ENCODE measurements at regions of chr6 and their contacts with region 1.

Region 1: DNA sequence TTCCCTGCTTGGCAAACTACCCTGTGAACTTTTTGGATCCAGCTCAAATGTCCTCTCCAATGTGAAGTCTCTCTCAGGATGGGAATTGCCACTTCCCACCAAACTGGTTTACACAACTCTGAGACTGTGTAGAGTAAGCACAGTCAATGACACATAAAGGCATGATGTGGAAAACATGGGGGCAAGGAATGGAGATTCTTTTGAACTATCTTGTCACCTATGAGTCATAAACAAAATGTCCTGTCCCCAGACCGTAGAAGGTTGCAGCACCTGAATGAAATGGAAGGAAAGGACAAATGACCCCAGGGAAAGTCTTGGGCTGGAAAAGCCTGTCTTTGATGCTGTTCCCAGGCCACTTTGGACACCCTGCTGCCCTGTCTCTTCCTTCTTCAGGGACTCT is 11.0 kb upstream of the KIF13A start:
- DNase-seq: no peak
- ATAC-seq: no peak
- H3K4me3 ChIP-seq: no peak overlapping the region
- H3K27ac ChIP-seq: no peak overlapping the region
- H3K4me1 ChIP-seq: peaks cover 0 to 9% (median 0%) of the 10 kb centered on the region in 12 donors
- H3K27me3 ChIP-seq: no peaks in the 10 kb centered on the region
- CTCF ChIP-seq: no peak
- POLR2A ChIP-seq: no peak

Region 2: GRCh38 chr6:17417817-17418216 is 580.6 kb before region 1 on chr6:
- intact Hi-C with region 1: no loop called
- DNase-seq: no peak
- ATAC-seq: peak in 2 of 4 donors; percentile 23 to 31
- H3K4me3 ChIP-seq: peak overlapping the region in 3 of 12 donors; percentile 21 to 25 (median 22)
- H3K27ac ChIP-seq: peak overlapping the region; percentile 49 to 88 (median 74)
- H3K4me1 ChIP-seq: peaks cover 0 to 46% (median 14%) of the 10 kb centered on the region in 12 donors
- H3K27me3 ChIP-seq: no peaks in the 10 kb centered on the region
- CTCF ChIP-seq: no peak
- POLR2A ChIP-seq: no peak

Region 3: DNA sequence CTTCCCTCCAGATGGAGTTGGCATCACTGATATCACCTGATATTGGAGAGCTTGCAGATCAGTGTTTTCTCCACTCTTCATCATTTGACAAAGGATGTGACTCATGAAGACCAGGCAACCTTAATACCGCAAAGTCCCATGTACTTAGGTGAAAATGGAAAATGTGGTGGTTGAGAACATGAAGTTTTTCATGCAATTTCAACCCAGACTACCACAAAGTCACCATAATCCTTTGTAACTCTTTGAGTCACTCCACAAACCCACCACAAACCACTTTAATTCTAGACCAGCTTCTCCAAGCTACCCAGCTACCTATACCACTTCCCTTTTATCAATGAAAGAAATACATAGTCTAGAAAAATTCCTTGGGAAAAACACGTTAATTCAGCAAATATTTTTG is 116.9 kb after region 1 on chr6:
- intact Hi-C with region 1: loop called in 3 of 10 experiments (anchors 5 to 10 kb)
- DNase-seq: no peak
- ATAC-seq: no peak
- H3K4me3 ChIP-seq: no peak overlapping the region
- H3K27ac ChIP-seq: no peak overlapping the region
- H3K4me1 ChIP-seq: no peaks in the 10 kb centered on the region
- H3K27me3 ChIP-seq: no peaks in the 10 kb centered on the region
- CTCF ChIP-seq: no peak
- POLR2A ChIP-seq: no peak

Measured in heart left ventricle (tissue), 16 donors.